Posterior vena cava (tissue), 2 donors: ENCODE measurements at regions of chr9 and their contacts with region 1.

Region 1: DNA sequence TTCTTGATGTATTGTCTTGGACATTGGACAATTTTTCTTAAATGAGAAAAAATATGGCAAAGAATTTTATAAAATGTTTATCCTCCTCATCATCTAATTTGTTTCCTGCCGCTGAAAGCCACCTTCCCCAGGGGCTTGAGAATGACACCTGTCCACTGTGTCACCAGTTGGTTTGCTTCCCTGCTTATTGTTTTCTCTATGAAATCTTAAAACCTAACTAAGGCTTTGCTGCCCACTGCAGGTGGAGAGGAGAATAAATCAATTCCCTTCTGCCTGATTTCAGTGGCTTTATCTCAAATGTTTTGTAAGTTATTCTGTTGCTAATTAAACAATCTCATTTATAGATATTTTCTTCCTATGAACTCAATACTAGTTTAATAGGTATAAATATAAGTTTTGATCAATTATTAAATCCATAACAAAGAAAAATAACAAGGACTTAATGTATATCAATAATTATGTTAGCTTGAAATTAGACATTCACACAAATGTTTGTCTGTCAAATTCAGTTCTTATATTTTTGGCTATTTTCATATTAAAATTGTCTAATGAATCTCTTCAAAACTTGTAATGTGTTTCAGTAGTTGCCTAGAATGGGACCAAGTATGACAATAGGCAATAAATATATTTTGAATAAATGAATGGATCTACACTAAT is 822.5 kb downstream of the PTPRD start:
- DNase-seq: no peak

Region 2: GRCh38 chr9:8262625-8263622 is 1527.4 kb before region 1 on chr9:
- intact Hi-C with region 1: loop called in 1 of 2 experiments (anchors 5 kb)
- DNase-seq: no peak

Region 3: GRCh38 chr9:9275601-9276000 is 514.7 kb before region 1 on chr9:
- intact Hi-C with region 1: no loop called
- DNase-seq: no peak

Region 4: GRCh38 chr9:9603345-9603744 is 187.0 kb before region 1 on chr9:
- intact Hi-C with region 1: loop called (anchors 10 kb)
- DNase-seq: peak; percentile 47